Ascending aorta (tissue), 2 donors: ENCODE measurements at regions of chr17 and their contacts with region 1.

Region 1: GRCh38 chr17:48131216-48131824 is 23.8 kb downstream of the SNX11 start:
- DNase-seq: peak in 1 of 2 donors; percentile 77
- H3K4me3 ChIP-seq: no peak overlapping the region
- H3K27ac ChIP-seq: no peak overlapping the region
- H3K4me1 ChIP-seq: no peaks in the 10 kb centered on the region
- H3K27me3 ChIP-seq: no peaks in the 10 kb centered on the region
- CTCF ChIP-seq: peak; percentile 67 to 89 (median 68)

Region 2: DNA sequence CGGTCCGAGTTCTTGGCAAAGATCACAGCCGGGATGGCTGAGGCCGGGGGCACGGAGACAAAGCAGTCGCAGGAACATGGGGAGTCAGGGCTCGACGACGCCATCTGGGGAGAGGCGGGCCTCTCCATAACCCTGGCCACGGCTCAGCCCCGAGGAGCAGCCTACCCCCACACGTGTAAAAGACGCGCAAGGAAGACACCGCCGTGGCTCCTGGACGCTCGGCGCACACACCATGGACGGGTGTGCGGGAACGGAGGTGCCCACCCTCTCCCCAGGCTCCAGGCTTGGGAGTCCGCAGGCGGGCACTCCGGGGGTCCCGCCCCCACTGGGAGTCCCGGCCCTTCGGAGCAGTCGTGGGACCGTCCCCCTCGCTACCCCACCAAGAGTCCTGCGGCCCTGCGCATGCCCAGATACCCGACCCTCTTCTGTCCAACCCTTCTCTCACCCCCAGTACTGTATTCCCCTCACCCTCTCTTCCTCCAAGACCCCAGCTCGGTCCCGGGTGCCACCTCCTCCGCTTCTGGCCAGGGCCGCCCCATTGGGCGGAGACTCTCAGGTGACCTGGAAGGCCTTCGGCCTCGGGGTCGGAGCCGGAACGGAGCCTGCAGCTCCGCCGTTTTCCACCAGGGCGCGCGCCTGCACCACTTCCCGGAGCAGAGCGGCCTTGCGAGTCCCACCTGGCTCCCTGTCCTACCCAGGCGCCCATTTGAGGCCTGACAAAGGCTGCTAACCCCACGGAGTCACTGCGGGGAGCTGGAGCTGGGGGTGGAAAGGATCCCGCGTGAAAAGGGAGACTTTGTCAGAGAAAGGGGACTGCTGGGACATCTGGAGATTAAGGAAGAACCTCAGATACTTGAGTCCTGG is 290.3 kb before region 1 on chr17 and contains the start of gene SCRN2:
- intact Hi-C with region 1: loop called (anchors 10 kb)
- DNase-seq: peak; percentile 30 to 94
- H3K4me3 ChIP-seq: peak within 1 kb of the TSS; percentile 64 to 83
- H3K27ac ChIP-seq: peak within 1 kb of the TSS; percentile 13 to 35
- H3K4me1 ChIP-seq: peaks cover 5 to 6% of the 10 kb centered on the region in 2 donors
- H3K27me3 ChIP-seq: no peaks in the 10 kb centered on the region
- CTCF ChIP-seq: peak; percentile 98 to 99 (median 98)
- total RNA-seq, gene SCRN2: 126 TPM

Region 3: DNA sequence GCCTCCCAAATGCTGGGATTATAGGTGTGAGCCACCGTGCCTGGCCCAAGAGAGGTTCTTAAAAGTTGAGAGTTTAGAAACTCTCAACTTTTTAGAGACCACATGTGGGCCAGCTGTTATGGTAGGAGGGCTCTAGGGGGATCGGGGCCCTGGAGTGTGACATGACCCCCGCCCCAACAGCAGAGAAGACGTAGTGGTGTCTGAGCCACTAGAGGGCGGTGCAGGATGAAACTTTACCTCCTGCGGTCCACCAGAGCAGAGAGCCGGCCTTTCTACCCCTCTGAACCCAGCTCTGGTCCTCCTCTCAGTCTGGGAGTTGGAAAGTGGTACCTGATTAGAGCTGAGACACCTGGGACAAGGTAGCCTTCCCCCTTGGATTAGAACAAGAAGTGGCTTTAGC is 153.0 kb before region 1 on chr17:
- intact Hi-C with region 1: loop called (anchors 2 kb)
- DNase-seq: no peak
- H3K4me3 ChIP-seq: no peak overlapping the region
- H3K27ac ChIP-seq: no peak overlapping the region
- H3K4me1 ChIP-seq: no peaks in the 10 kb centered on the region
- H3K27me3 ChIP-seq: no peaks in the 10 kb centered on the region
- CTCF ChIP-seq: peak; percentile 39 to 71 (median 62)

Region 4: GRCh38 chr17:48074315-48075081 is 56.8 kb before region 1 on chr17:
- intact Hi-C with region 1: loop called (anchors 2 kb)
- DNase-seq: peak in 1 of 2 donors; percentile 92
- H3K4me3 ChIP-seq: no peak overlapping the region
- H3K27ac ChIP-seq: peak overlapping the region in 1 of 2 donors; percentile 34
- H3K4me1 ChIP-seq: no peaks in the 10 kb centered on the region
- H3K27me3 ChIP-seq: no peaks in the 10 kb centered on the region
- CTCF ChIP-seq: peak; percentile 67 to 83 (median 82)

Region 5: GRCh38 chr17:48084932-48085444 is 46.3 kb before region 1 on chr17:
- intact Hi-C with region 1: no loop called
- DNase-seq: no peak
- H3K4me3 ChIP-seq: no peak overlapping the region
- H3K27ac ChIP-seq: no peak overlapping the region
- H3K4me1 ChIP-seq: peaks cover 0 to 15% of the 10 kb centered on the region in 2 donors
- H3K27me3 ChIP-seq: no peaks in the 10 kb centered on the region
- CTCF ChIP-seq: no peak

Region 6: GRCh38 chr17:48107168-48108132 is 23.9 kb before region 1 on chr17 and contains the start of gene SNX11:
- intact Hi-C with region 1: loop called (anchors 2 kb)
- DNase-seq: peak; percentile 79 to 94
- H3K4me3 ChIP-seq: peak within 1 kb of the TSS; percentile 65 to 84
- H3K27ac ChIP-seq: peak within 1 kb of the TSS; percentile 92 to 95
- H3K4me1 ChIP-seq: peaks cover 5 to 10% of the 10 kb centered on the region in 2 donors
- H3K27me3 ChIP-seq: no peaks in the 10 kb centered on the region
- CTCF ChIP-seq: no peak
- total RNA-seq, gene SNX11: 6.6 TPM

Region 7: GRCh38 chr17:48374650-48375230 is 243.4 kb after region 1 on chr17:
- intact Hi-C with region 1: no loop called
- DNase-seq: no peak
- H3K4me3 ChIP-seq: no peak overlapping the region
- H3K27ac ChIP-seq: no peak overlapping the region
- H3K4me1 ChIP-seq: no peaks in the 10 kb centered on the region
- H3K27me3 ChIP-seq: no peaks in the 10 kb centered on the region
- CTCF ChIP-seq: peak in 2 of 3 experiments; percentile 27 to 28